RWPE1 (cell line): ENCODE measurements at regions of chr12 and their contacts with region 1.

Region 1: DNA sequence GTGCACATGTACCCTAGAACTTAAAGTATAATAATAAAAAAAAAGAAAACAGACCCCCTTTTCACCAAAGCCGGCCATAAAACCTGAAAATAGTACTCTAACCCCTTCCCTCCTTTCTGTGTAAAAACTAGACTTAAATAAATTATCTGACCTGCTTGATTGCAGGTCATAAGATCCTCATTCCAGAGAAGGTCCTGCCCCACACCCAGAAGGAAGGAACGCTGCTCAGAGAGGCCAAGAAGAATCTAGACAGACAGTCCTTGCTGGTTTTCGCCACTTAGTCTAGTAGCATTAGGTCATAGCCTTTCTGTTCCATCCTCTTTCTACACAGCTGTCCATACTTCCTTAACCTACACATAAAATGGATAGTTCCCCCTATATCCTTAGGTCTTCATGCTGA is 83.6 kb upstream of the IGF1 start:
- DNase-seq: no peak
- H3K27ac ChIP-seq: no peak overlapping the region
- CTCF ChIP-seq: no peak

Region 2: DNA sequence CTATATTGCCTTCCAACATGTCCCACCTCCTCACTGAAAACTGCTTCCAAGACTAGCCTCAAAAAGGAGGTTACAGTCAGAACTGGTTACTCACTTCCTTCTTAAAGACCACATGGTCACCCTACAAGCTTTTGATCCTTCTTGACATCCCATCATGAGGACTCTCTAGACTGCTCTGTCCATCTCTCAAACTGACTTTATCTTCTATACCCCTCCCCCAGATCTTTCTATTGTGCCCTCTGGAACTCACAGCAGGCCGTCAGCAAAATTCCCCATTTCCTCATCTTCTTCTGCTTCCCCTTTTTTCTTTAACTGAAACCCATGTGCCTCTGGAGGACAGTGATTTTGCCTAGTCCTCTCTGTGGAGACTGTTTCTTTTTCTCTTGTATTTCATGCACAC is 65.5 kb before region 1 on chr12:
- CTCF ChIA-PET with region 1: no interaction called
- POLR2A ChIA-PET with region 1: no interaction called
- DNase-seq: no peak
- H3K27ac ChIP-seq: no peak overlapping the region
- CTCF ChIP-seq: no peak

Region 3: GRCh38 chr12:102629262-102629888 is 65.4 kb after region 1 on chr12:
- CTCF ChIA-PET with region 1: no interaction called
- POLR2A ChIA-PET with region 1: interaction called, 10 read pairs
- DNase-seq: no peak
- H3K27ac ChIP-seq: no peak overlapping the region
- CTCF ChIP-seq: no peak